K562 (cell line): ENCODE measurements at regions of chr1 and their contacts with region 1.

Region 1: GRCh38 chr1:44036409-44037139 is 5.3 kb upstream of the SLC6A9 start:
- DNase-seq: peak; percentile 73 to 93 (median 78)
- ATAC-seq: peak; percentile 74
- H3K4me3 ChIP-seq: no peak overlapping the region
- H3K27ac ChIP-seq: peak overlapping the region; percentile 53
- H3K4me1 ChIP-seq: peaks cover 60 to 63% of the 10 kb centered on the region in 2 experiments
- H3K27me3 ChIP-seq: no peaks in the 10 kb centered on the region
- CTCF ChIP-seq: peak; percentile 94 to 95 (median 95)
- EP300 ChIP-seq: peak; percentile 63; the same call in 1 of the 2 replicates
- POLR2A ChIP-seq: no peak
- RAD21 ChIP-seq: peak; percentile 87 to 96

Region 2: DNA sequence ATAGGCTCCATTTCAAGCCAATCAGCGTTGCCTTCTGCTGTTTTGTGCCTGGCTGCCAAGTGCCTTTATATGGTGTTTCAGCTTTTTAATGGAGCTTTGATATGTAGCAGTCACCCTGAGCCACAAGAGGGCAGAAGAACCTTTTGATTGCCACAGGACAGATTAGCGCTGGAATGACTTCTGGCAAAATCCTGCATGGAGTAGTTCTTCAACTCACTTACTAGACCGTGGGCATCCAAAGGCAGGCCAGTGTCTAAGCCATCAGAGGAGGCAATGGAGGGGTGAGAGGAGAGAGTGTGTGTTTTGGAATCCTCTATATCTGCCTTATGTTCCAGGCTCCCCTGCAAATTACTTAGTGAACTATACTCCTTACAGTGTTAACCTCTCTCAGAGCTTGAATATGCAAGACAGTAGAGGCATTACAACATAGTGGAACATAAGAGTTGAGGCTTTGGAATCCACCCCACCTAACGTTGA is 273.0 kb before region 1 on chr1:
- CTCF ChIA-PET with region 1: interaction called, 13 read pairs
- POLR2A ChIA-PET with region 1: interaction called, 3 read pairs
- in situ Hi-C with region 1: no loop called
- intact Hi-C with region 1: no loop called
- DNase-seq: peak; percentile 58 to 84 (median 66)
- ATAC-seq: peak; percentile 95
- H3K4me3 ChIP-seq: no peak overlapping the region
- H3K27ac ChIP-seq: no peak overlapping the region
- H3K4me1 ChIP-seq: peaks cover 7 to 26% of the 10 kb centered on the region in 2 experiments; a peak in 3 of 5 replicates
- H3K27me3 ChIP-seq: no peaks in the 10 kb centered on the region
- CTCF ChIP-seq: peak; percentile 92 to 98 (median 92)
- EP300 ChIP-seq: no peak
- POLR2A ChIP-seq: no peak
- RAD21 ChIP-seq: peak; percentile 98

Region 3: DNA sequence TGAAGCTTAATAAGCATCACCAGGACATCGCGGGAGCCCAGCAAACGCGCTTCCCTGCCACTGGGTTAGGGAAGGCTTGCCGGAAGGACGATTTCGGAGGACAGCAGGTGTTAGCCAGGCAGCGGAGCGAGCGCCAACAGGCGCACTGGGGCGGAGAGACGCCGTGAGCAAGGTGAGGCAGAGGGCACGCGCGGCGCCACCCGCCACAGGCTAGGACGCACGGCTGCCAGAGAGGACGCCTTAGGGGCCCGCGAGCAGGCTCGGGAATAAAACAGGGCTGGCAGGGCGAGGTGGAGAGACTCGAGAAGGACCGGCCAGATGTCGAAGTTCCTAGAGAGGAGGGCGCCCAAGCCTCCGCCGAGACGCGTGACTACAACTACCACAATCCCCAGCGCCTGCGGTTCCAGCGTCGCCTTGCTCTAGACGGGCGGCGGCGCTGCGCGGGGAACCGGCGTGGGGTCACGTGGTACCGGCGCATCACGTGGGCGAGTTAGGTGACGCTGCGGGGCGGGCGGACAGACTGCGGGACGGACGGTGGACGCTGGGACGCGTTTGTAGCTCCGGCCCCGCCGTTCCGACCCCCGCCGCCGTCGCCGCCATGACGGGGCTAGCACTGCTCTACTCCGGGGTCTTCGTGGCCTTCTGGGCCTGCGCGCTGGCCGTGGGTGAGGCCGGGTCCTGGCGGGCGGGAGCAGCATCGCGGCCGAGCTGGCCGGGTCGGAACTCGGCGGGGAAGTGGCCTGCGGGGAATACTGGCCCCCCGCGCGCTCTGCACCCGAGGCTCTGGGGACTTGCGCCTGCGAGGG is 61.9 kb before region 1 on chr1 and contains the start of gene ATP6V0B:
- CTCF ChIA-PET with region 1: interaction called, 5 read pairs
- POLR2A ChIA-PET with region 1: interaction called, 10 read pairs
- in situ Hi-C with region 1: no loop called
- intact Hi-C with region 1: no loop called
- DNase-seq: peak; percentile 91 to 99 (median 95)
- ATAC-seq: peak; percentile 87
- H3K4me3 ChIP-seq: peak within 1 kb of the TSS; percentile 87
- H3K27ac ChIP-seq: peak within 1 kb of the TSS; percentile 89
- H3K4me1 ChIP-seq: peaks cover 41 to 67% of the 10 kb centered on the region in 2 experiments
- H3K27me3 ChIP-seq: no peaks in the 10 kb centered on the region
- CTCF ChIP-seq: peak in 1 of 3 experiments; percentile 33; a peak in 2 of 6 replicates
- EP300 ChIP-seq: no peak; the same call in 1 of the 2 replicates
- POLR2A ChIP-seq: peak; percentile 81
- RAD21 ChIP-seq: 0 out of 4 replicates have a peak, but pooled peaks of 1 of the 2 experiments have one; percentile 13
- polyA plus RNA-seq, gene ATP6V0B: 137 to 276 TPM

Region 4: DNA sequence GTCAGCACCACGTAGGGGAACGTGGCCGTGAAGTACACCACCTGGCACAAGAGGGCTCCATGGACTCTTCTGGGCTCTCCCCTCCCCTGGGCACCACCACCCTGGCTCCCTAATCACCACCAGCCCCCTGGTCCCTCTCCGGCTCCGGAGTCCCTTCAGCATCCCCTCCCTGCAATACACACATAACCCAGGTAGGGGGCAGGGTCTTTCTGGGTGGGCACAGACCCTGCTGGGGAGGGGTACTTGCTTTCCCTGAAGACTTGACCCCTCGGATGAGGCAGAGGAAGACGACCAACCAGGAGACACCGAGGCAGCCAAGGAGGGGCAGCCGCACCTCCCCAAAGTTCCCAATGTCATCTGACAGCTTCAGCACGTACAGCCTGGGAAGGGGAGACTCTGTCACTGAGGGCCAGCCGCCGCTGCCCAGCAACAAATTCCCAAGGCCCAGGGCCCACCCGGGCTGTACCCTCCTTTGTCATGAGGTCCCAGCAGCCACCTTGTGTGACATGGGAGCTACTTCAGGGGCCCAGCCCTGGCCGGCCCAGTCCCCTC is 33.9 kb before region 1 on chr1:
- CTCF ChIA-PET with region 1: interaction called, 56 read pairs
- POLR2A ChIA-PET with region 1: interaction called, 17 read pairs
- in situ Hi-C with region 1: loop called (anchors 5 kb)
- intact Hi-C with region 1: loop called (anchors 1 kb)
- DNase-seq: no peak
- ATAC-seq: no peak
- H3K4me3 ChIP-seq: no peak overlapping the region
- H3K27ac ChIP-seq: no peak overlapping the region
- H3K4me1 ChIP-seq: peaks cover 0 to 49% of the 10 kb centered on the region in 2 experiments; a peak in 3 of 5 replicates
- H3K27me3 ChIP-seq: no peaks in the 10 kb centered on the region
- CTCF ChIP-seq: peak; percentile 20 to 50 (median 48); a peak in 4 of 6 replicates
- EP300 ChIP-seq: no peak
- POLR2A ChIP-seq: no peak
- RAD21 ChIP-seq: no peak

Region 5: DNA sequence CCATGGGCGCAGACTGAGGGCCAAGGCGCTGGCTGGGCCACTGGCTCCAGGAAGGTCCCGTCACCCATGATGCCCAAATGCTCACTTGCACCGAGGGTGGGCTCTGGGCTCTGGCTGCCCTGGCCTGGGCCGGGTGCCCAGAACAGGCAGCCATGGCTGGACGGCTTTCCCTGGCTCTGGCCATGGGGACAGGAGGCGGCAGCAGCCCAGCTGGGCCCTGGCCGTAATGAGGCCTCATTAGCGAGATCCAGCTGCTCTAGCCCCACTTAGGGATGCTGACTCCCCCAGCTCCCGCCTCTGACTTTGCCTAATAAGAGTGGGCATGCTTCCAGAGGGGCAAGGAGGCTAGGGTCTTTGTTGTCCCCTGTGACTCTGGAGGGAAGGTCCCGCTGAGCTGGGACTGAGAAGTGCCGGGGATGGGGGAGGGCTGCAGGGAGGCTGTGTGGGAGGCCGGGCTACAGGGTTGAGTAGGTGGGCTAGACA is 17.1 kb before region 1 on chr1:
- CTCF ChIA-PET with region 1: no interaction called
- POLR2A ChIA-PET with region 1: interaction called, 29 read pairs
- in situ Hi-C with region 1: no loop called
- intact Hi-C with region 1: no loop called
- DNase-seq: no peak
- ATAC-seq: no peak
- H3K4me3 ChIP-seq: no peak overlapping the region
- H3K27ac ChIP-seq: no peak overlapping the region
- H3K4me1 ChIP-seq: peaks cover 5 to 39% of the 10 kb centered on the region in 2 experiments; a peak in 4 of 5 replicates
- H3K27me3 ChIP-seq: no peaks in the 10 kb centered on the region
- CTCF ChIP-seq: no peak
- EP300 ChIP-seq: no peak
- POLR2A ChIP-seq: no peak
- RAD21 ChIP-seq: no peak

Region 6: GRCh38 chr1:44103270-44104131 is 66.9 kb after region 1 on chr1:
- CTCF ChIA-PET with region 1: no interaction called
- POLR2A ChIA-PET with region 1: no interaction called
- in situ Hi-C with region 1: no loop called
- intact Hi-C with region 1: no loop called
- DNase-seq: peak in 2 of 4 experiments; percentile 39 to 84
- ATAC-seq: peak; percentile 79
- H3K4me3 ChIP-seq: 0 out of 2 replicates have a peak overlapping the region, but pooled peaks have one; percentile 12
- H3K27ac ChIP-seq: no peak overlapping the region
- H3K4me1 ChIP-seq: peaks cover 4 to 12% of the 10 kb centered on the region in 2 experiments; a peak in 3 of 5 replicates
- H3K27me3 ChIP-seq: peaks cover 20 to 35% of the 10 kb centered on the region in 2 experiments
- CTCF ChIP-seq: peak; percentile 70 to 81 (median 80)
- EP300 ChIP-seq: no peak
- POLR2A ChIP-seq: no peak
- RAD21 ChIP-seq: peak in 1 of 2 experiments; percentile 63; a peak in 2 of 4 replicates